Posterior vena cava (tissue), 2 donors: ENCODE measurements at regions of chr9 and their contacts with region 1.

Region 1: GRCh38 chr9:34430843-34431437 is 27.4 kb downstream of the FAM219A start:
- DNase-seq: peak; percentile 85

Region 2: DNA sequence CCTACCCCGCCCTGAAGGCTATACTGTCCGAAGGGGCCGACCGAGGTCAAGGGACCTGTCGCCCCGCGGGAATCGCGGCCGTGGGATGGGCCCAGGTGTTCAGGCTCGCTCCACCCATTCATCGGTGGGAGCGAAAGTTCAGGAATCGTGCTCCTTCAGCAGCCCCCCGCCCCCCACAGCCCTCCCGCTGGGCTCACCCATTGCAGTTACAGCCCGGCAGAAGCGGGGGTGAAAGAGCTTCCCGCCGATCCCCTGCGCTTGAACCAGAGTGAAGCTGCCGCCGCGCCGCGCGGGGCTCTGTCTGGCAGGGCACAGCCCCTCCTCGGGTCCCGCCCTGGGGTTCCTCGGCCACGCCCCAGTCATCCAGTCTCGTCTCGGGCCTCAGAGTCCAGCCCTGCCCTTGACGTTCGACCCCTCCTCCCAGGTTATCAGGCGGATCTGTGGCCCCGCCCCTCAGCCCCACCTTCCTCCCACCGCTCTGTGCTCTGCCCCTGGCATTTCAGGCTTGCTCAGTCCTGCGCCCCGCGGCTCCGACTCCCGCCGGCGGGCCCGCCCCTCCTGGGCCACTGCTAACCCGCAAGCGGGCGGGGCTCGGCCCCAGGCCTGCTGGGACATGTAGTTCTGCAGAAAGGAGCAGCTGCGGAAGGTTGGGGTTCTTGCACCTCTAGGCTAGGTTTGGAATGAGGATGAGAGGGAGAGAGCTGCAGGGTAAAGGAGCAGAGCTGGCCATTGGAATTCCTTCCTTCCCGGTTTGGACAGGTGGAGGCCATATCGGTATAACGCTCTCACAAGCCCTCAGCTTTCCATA is 54.1 kb before region 1 on chr9 and contains the start of gene MYORG:
- intact Hi-C with region 1: no loop called
- DNase-seq: peak; percentile 97
- total RNA-seq, gene MYORG: 12.0 to 30.6 TPM

Region 3: DNA sequence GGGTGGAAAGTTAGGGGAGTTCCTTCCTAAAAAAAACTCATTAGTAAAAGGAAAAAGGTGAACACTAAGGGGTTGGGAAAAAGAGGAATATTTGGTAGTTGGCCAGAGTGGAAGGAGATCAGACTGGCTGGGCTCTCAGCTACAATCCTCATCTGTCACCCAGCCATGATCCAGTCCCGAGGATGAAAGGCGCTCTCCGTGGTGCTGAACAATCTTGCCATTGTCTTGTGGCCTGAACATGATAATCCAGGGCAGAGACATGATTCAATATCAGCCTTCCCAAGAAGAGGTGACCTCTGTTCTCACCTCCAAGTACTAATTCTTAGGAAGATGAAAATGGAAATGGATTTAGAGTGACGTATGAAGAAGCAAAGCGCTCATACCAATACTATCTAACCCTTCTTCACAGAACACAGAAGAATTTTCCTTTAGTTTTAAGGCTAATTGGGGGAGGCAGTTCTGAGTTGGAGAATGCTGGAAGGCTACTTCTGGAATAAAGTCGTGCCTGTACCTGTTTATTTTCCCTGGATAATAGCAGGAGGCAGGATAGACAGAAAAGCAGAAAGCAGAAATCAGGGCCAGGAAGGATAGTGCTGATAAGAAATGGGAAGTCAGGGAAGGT is 17.6 kb before region 1 on chr9:
- intact Hi-C with region 1: no loop called
- DNase-seq: no peak

Region 4: DNA sequence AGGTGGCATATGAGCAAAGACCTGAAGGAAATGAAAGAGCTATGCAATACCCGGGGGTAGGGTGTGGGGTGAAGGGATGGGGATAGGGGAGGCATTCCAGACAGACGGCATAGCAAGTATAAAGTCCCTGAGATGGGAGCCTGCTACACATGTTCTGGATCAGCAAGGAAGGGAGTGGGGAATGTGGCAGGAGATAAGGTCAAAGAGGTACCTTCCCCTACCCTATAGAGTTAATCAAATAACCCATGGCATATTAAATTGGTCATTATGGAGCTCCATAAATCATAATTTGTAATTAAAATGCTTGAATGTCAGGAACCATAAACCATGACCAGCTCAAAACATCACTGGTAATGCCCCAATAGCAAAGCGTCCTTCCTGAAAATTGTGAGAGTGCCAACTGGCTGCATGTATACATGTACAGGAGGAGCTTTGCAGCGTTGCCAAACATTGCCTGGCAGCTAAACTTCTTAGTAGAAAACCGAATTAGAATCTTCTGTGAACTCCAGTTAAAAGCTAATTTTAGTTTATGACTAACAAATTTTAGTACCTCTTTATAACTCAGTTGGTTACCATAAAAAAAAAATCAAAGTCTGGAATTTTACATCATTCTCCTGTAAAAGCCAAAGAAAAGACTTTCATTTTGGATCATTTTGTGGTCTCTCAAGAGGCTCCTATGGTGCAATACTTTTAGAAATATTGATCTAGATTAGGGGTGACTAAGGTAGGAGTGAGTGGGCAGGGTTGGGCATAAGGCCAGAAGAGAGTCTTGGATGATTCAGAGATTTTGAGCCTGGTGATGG is 32.4 kb after region 1 on chr9:
- intact Hi-C with region 1: loop called in 1 of 2 experiments (anchors 2 kb)
- DNase-seq: no peak

Region 5: DNA sequence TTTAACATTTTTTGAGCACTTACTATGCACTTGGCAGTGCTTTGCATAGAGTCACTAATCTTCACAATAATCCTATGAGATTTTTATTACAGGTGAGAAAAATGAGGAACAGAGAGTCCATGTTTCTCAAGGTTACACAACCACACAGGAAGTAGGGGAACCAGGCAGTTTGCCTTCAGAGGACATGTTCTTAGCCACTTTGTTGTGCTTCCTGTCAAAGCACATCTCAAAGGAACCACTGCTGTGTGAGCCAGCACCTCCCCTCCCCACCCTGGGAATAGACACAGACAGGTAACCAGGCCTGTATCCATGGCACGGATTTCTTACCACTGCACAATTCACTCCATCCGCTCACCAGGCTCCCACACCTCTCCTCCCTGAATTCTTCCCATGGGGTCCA is 552.3 kb after region 1 on chr9:
- intact Hi-C with region 1: no loop called
- DNase-seq: no peak

Region 6: DNA sequence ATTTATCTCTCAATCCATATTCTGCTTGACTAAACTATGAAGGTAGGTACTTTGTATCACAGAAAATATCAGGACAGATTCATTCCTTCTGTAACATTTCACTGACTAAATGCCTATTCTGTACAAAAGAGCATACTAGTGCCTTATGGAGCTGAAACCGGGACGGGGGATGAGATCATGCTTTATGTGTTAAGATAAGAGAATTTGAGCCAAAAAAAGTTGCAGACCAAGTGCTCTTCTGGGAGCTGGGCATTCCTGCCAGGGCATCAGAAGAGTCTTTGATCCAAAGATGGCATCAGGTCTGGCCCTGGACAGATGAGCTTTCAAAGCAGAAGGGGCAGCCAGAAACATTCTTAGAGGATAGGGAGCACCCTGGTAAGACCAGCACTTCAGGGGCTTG is 1678.1 kb after region 1 on chr9:
- intact Hi-C with region 1: loop called in 1 of 2 experiments (anchors 5 kb)
- DNase-seq: no peak